ENCODE measurements at regions of chr12 and their contacts with region 1.

Region 1: GRCh38 chr12:12704593-12705230 is 8.7 kb upstream of the GPR19 start:
- DNase-seq: peak in 1 of 2 donors; percentile 67
- H3K4me3 ChIP-seq: no peak overlapping the region
- H3K27ac ChIP-seq: no peak overlapping the region
- H3K4me1 ChIP-seq: no peaks in the 10 kb centered on the region
- H3K27me3 ChIP-seq: no peaks in the 10 kb centered on the region
- CTCF ChIP-seq: peak; percentile 81 to 100 (median 99)
- POLR2A ChIP-seq: no peak

Region 2: DNA sequence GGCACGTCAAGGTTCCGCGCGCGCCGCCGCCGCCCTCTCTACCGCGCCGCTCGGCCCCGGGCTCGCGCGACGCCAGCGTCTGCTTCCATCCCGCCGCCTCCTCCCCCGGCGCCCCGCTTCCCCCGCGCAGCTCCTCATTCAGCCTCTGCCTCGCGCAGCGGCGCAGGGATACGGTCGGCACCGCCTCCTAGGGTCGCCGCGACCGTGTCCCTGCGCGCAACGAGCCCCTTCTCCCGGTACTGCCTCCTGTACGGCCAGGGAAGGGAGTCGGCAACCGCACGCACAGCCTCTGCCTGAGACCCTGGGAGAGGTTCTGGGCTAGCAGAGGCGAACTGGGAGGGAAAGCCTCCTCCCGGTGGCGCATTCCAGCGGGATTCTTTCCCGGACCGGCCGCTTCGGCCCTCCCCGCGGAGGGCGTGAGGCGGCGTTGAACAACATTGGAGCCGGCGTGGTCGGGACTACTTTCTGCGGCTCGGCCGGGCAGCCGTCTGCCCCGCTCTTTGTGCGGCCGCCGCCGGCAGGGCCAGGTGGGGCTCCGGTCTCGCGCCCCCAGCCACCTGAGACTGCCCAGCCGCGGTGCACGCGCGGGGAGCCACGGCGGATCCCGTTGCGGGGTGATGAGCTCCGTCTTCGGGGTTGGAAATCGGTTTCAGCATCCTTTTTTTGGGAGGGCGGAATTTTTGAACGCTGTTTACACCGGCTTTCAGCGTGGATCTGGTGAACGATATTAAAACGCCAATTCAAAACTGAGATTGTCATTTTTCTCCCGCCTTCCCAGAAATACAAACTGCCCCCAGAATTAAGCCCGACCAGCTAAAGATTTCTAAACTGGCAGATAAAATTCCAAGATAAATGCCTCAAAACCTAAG is 437.6 kb before region 1 on chr12 and contains the start of gene LRP6:
- intact Hi-C with region 1: loop called (anchors 2 kb)
- DNase-seq: peak; percentile 78 to 88
- H3K4me3 ChIP-seq: peak within 1 kb of the TSS; percentile 77 to 86 (median 85)
- H3K27ac ChIP-seq: peak within 1 kb of the TSS; percentile 99 to 100
- H3K4me1 ChIP-seq: peaks cover 0 to 3% of the 10 kb centered on the region in 2 donors
- H3K27me3 ChIP-seq: no peaks in the 10 kb centered on the region
- CTCF ChIP-seq: peak in 1 of 3 donors; percentile 20
- POLR2A ChIP-seq: peak; percentile 67
- total RNA-seq, gene LRP6: 28.6 to 69.1 (median 52.4) TPM

Region 3: DNA sequence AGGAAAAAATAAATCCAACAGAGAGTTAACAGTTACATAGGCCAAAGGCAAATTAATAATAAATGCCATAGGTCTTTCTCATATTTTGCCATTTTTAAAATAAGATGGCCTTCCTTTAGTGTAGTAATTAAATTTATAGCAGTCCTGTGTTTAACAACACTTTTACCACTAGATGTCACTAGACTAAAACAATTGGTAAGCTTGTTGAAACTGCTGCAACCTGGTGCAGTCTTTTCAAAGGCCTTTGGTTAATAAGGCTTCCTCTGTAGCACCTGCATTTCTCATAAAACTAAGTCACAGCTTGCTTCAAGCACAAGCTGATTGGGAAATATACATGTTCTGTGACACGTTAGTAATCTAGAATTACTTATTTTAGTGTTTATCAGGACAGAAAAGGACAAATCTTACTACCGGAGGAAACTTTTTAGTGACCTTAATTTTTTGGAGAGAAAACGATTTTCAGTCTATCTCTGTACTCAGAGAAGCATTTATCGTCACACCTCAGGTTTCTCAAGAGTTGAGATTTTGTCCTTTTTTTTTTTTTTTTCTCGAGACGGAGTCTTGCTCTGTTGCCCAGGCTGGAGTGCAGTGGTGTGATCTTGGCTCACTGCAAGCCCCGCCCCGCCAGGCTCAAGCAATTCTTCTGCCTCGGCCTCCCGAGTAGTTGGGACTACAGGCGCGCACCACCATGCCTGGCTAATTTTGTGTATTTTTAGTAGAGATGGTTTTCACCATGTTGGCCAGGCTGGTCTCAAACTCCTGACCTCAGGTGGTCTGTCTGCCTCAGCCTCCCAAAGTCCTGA is 327.9 kb before region 1 on chr12:
- intact Hi-C with region 1: loop called (anchors 10 kb)
- DNase-seq: no peak
- H3K4me3 ChIP-seq: no peak overlapping the region
- H3K27ac ChIP-seq: no peak overlapping the region
- H3K4me1 ChIP-seq: no peaks in the 10 kb centered on the region
- H3K27me3 ChIP-seq: no peaks in the 10 kb centered on the region
- CTCF ChIP-seq: peak; percentile 81 to 83 (median 83)
- POLR2A ChIP-seq: no peak

Region 4: DNA sequence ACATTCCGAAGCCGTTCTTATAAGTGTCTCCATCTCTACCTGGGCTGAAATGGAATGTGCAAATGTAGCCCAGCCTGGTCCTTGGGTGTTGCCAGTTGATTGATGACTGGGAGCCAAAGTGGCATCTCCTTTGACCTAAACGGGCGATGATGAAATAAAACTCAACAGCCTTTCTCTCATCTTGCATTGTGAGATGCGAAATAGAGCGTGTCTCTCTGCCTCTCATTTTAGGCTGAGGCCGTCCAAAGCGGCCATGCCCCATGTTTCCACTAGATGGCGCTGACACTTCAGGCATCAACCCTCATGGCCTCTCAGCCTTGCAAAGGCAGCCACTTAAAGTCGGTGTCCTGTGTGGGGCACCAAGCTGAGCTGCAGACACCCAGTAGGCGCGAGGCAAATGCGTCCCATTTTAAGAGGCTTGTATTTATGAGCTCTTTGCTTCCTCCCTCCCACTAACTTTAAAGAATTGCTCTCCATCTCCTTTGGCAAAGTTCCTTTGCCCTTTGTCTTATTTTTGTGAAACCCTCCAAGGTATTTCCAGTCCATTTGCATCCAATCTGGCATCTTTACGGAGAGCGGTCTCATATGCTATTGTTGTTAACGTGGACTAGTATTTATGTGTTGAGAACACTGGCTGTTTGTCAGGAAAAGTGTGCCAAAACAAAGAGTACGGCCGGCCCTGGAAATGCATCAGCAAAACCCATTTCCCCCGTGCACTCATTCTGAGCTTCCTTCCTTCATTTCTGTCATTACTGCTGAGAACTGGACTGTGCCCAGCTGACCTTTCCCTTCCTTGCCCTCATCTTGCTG is 211.6 kb after region 1 on chr12:
- intact Hi-C with region 1: no loop called
- DNase-seq: peak; percentile 80 to 85
- H3K4me3 ChIP-seq: peak overlapping the region in 1 of 3 donors; percentile 24
- H3K27ac ChIP-seq: peak overlapping the region; percentile 9 to 75
- H3K4me1 ChIP-seq: no peaks in the 10 kb centered on the region
- H3K27me3 ChIP-seq: no peaks in the 10 kb centered on the region
- CTCF ChIP-seq: peak; percentile 91 to 97 (median 92)
- POLR2A ChIP-seq: no peak